AG04450 (cell line): ENCODE measurements at regions of chr2 and their contacts with region 1.

Region 1: GRCh38 chr2:69779258-69780001 is 37.5 kb downstream of the ANXA4 start:
- DNase-seq: no peak
- H3K4me3 ChIP-seq: no peak overlapping the region
- H3K27ac ChIP-seq: no peak overlapping the region
- H3K27me3 ChIP-seq: no peaks in the 10 kb centered on the region
- CTCF ChIP-seq: no peak

Region 2: GRCh38 chr2:69741619-69742466 is 37.6 kb before region 1 on chr2 and contains the start of gene ANXA4:
- CTCF ChIA-PET with region 1: interaction called, 5 read pairs
- POLR2A ChIA-PET with region 1: interaction called, 22 read pairs
- DNase-seq: peak; percentile 45
- H3K4me3 ChIP-seq: peak within 1 kb of the TSS; percentile 73
- H3K27ac ChIP-seq: peak within 1 kb of the TSS; percentile 95
- H3K27me3 ChIP-seq: no peaks in the 10 kb centered on the region
- CTCF ChIP-seq: no peak
- polyA plus RNA-seq, gene ANXA4: 105 and 125 TPM in 2 replicates

Region 3: GRCh38 chr2:69755862-69756467 is 23.5 kb before region 1 on chr2:
- CTCF ChIA-PET with region 1: no interaction called
- POLR2A ChIA-PET with region 1: no interaction called
- DNase-seq: no peak
- H3K4me3 ChIP-seq: no peak overlapping the region
- H3K27ac ChIP-seq: no peak overlapping the region
- H3K27me3 ChIP-seq: no peaks in the 10 kb centered on the region
- CTCF ChIP-seq: no peak